GM12878 (cell line): ENCODE measurements at regions of chr7 and their contacts with region 1.

Region 1: GRCh38 chr7:111855161-111855856 is 293.0 kb upstream of the IMMP2L start:
- DNase-seq: peak; percentile 2
- ATAC-seq: peak; percentile 90
- H3K4me3 ChIP-seq: no peak overlapping the region
- H3K27ac ChIP-seq: no peak overlapping the region
- H3K4me1 ChIP-seq: no peaks in the 10 kb centered on the region
- H3K27me3 ChIP-seq: no peaks in the 10 kb centered on the region
- CTCF ChIP-seq: peak; percentile 48 to 54 (median 50); a peak in 5 of 6 replicates
- EP300 ChIP-seq: no peak
- POLR2A ChIP-seq: no peak
- RAD21 ChIP-seq: peak; percentile 36

Region 2: DNA sequence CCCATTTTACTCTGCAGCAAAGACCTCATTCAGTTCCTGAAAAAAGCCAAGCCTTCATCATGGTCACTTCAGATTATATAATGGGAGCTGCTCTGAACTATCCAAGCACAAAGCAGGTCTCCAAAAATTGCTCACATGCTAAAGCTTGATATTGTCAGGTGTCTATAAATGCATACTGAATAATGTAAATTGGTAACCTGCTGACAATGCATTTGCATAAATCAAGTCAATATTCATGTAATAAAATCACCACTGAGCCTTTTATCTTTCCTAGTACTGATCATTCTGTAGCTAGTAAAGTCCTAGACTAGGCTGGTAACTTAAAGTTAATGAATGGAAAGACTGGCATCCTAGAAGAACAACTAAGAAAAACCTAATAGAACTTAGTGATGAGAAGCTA is 481.3 kb before region 1 on chr7:
- CTCF ChIA-PET with region 1: no interaction called
- POLR2A ChIA-PET with region 1: no interaction called
- RAD21 ChIA-PET with region 1: no interaction called
- SMC1A ChIA-PET with region 1: no interaction called
- in situ Hi-C with region 1: no loop called
- intact Hi-C with region 1: no loop called
- DNase-seq: no peak
- ATAC-seq: no peak
- H3K4me3 ChIP-seq: no peak overlapping the region
- H3K27ac ChIP-seq: no peak overlapping the region
- H3K4me1 ChIP-seq: no peaks in the 10 kb centered on the region
- H3K27me3 ChIP-seq: no peaks in the 10 kb centered on the region
- CTCF ChIP-seq: no peak
- EP300 ChIP-seq: no peak
- POLR2A ChIP-seq: no peak
- RAD21 ChIP-seq: no peak

Region 3: GRCh38 chr7:111752022-111752582 is 103.2 kb before region 1 on chr7:
- CTCF ChIA-PET with region 1: interaction called, 40 read pairs
- POLR2A ChIA-PET with region 1: interaction called, 4 read pairs
- RAD21 ChIA-PET with region 1: interaction called, 18 read pairs
- SMC1A ChIA-PET with region 1: interaction called, 7 read pairs
- in situ Hi-C with region 1: no loop called
- intact Hi-C with region 1: loop called (anchors 1 kb)
- DNase-seq: no peak
- ATAC-seq: peak; percentile 96
- H3K4me3 ChIP-seq: no peak overlapping the region
- H3K27ac ChIP-seq: no peak overlapping the region
- H3K4me1 ChIP-seq: no peaks in the 10 kb centered on the region
- H3K27me3 ChIP-seq: no peaks in the 10 kb centered on the region
- CTCF ChIP-seq: peak; percentile 61 to 88 (median 81)
- EP300 ChIP-seq: no peak
- POLR2A ChIP-seq: no peak
- RAD21 ChIP-seq: peak; percentile 69

Region 4: GRCh38 chr7:111763221-111763801 is 92.0 kb before region 1 on chr7:
- CTCF ChIA-PET with region 1: interaction called, 3 read pairs
- POLR2A ChIA-PET with region 1: no interaction called
- RAD21 ChIA-PET with region 1: no interaction called
- SMC1A ChIA-PET with region 1: interaction called, 3 read pairs
- in situ Hi-C with region 1: no loop called
- intact Hi-C with region 1: loop called (anchors 1 kb)
- DNase-seq: no peak
- ATAC-seq: peak; percentile 64
- H3K4me3 ChIP-seq: no peak overlapping the region
- H3K27ac ChIP-seq: no peak overlapping the region
- H3K4me1 ChIP-seq: no peaks in the 10 kb centered on the region
- H3K27me3 ChIP-seq: no peaks in the 10 kb centered on the region
- CTCF ChIP-seq: peak; percentile 19 to 43 (median 24); a peak in 4 of 6 replicates
- EP300 ChIP-seq: no peak
- POLR2A ChIP-seq: no peak
- RAD21 ChIP-seq: peak; percentile 51

Region 5: DNA sequence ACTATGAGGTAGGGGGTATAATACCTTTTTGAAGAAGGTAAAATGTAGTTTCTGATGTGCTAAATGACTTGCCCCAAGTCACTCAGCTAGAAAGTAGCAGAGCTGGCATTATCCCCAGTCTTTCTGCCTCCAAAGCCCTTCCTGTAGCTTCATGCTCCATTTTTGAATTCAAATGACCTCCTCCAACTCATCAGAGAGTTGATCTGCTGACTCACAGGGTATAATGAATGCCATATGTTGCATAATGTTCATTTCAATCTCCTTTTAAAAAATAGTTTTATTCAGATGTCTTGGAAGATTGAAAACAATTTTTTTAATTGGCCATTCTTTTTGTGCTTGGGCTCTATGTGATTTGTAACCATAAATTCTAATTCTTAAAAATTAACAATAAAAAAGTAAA is 20.2 kb before region 1 on chr7:
- CTCF ChIA-PET with region 1: interaction called, 12 read pairs
- POLR2A ChIA-PET with region 1: no interaction called
- RAD21 ChIA-PET with region 1: interaction called, 3 read pairs
- SMC1A ChIA-PET with region 1: no interaction called
- in situ Hi-C with region 1: no loop called
- intact Hi-C with region 1: no loop called
- DNase-seq: no peak
- ATAC-seq: no peak
- H3K4me3 ChIP-seq: no peak overlapping the region
- H3K27ac ChIP-seq: no peak overlapping the region
- H3K4me1 ChIP-seq: no peaks in the 10 kb centered on the region
- H3K27me3 ChIP-seq: no peaks in the 10 kb centered on the region
- CTCF ChIP-seq: no peak
- EP300 ChIP-seq: no peak
- POLR2A ChIP-seq: no peak
- RAD21 ChIP-seq: no peak